Caco-2 (cell line): ENCODE measurements at regions of chr17 and their contacts with region 1.

Region 1: DNA sequence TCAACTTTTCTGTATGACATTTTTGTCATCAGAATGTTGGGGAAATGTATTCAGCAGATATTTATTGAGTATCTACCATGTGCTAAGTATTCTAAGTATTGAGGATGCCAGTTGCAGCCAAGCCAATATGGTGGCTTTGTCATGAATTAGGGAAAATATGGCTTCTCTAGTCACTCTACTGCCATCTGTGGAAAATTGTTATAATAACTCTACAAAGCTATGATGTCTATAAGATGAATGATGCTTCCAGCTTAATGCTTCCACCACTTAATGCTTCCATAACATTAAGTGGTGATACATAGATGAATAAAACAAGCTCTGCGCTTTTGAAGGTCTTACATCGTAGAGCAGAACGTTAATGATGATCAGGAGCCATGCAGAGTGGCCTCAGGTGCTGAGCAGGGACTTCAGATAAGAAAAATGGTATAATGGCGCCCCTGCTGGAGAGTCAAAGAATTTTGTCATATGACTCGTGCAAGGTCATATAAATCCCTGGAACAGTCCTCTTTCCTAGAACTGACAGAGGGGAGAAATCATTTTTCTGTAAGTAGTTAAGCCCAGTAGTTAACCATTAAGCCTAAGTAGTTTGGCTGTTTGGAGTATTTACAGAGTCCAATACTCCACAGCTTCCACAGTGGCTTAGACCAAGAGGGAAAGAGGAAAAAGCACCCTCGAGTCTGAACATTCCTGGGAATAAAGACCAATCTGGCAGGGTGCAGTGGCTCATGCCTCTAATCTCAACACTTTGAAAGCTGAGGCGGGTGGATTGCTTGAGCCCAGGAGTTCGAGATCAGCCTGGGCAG is 2.7 kb upstream of the TMIGD1 start:
- DNase-seq: peak; percentile 82 to 85
- H3K4me3 ChIP-seq: no peak overlapping the region
- H3K4me3 Mint-ChIP-seq: peak overlapping the region; percentile 48
- H3K27ac Mint-ChIP-seq: peak overlapping the region; percentile 78
- H3K4me1 ChIP-seq: peaks cover 56% of the 10 kb centered on the region
- H3K4me1 Mint-ChIP-seq: peaks cover 57% of the 10 kb centered on the region
- H3K27me3 ChIP-seq: no peaks in the 10 kb centered on the region
- H3K27me3 Mint-ChIP-seq: no peaks in the 10 kb centered on the region
- CTCF ChIP-seq: peak; percentile 60 to 92

Region 2: DNA sequence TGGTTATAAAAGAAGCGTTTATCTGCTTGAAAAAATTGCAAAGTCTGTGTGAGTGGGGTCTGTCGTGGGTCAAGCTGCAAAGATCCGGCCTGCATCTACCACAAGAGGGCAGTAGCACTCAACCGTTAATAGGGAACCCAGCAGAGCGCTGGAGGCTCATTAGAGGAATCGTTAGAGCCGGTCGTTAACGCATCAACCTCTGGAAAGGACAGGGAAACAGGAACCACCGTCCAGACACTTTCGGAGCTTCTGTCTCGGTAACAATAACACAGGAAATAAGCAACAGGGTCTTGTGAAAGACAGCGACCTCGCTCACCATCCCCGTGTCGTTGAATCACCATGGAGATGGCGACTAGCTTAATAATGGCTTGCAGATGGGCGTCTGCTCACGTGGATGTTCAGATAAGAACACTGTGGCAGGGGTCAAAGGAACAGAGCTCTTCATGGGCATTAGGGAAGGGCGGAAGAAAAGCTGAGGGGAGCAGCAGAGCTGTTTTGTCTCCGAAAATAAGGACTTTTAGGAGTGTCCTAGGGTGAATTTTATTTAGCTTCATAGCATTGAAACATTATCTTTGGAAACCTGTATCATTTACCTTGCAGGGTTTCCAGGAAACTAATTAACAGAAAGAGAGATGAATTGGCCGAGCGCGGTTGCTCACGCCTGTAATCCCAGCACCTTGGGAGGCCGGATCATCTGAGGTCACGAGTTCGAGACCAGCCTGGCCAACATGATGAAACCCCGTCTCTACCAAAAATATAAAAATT is 231.8 kb before region 1 on chr17:
- CTCF ChIA-PET with region 1: interaction called, 39 read pairs
- POLR2A ChIA-PET with region 1: no interaction called
- intact Hi-C with region 1: loop called (anchors 1 kb)
- DNase-seq: peak; percentile 86 to 90
- H3K4me3 ChIP-seq: peak overlapping the region; percentile 42
- H3K4me3 Mint-ChIP-seq: peak overlapping the region; percentile 73
- H3K27ac Mint-ChIP-seq: peak overlapping the region; percentile 80
- H3K4me1 ChIP-seq: no peaks in the 10 kb centered on the region
- H3K4me1 Mint-ChIP-seq: peaks cover 7% of the 10 kb centered on the region
- H3K27me3 ChIP-seq: no peaks in the 10 kb centered on the region
- H3K27me3 Mint-ChIP-seq: no peaks in the 10 kb centered on the region
- CTCF ChIP-seq: peak; percentile 94 to 97

Region 3: GRCh38 chr17:30191072-30191471 is 145.5 kb before region 1 on chr17:
- CTCF ChIA-PET with region 1: no interaction called
- POLR2A ChIA-PET with region 1: no interaction called
- intact Hi-C with region 1: loop called (anchors 5 kb)
- DNase-seq: no peak
- H3K4me3 ChIP-seq: no peak overlapping the region
- H3K4me3 Mint-ChIP-seq: no peak overlapping the region
- H3K27ac Mint-ChIP-seq: no peak overlapping the region
- H3K4me1 ChIP-seq: no peaks in the 10 kb centered on the region
- H3K4me1 Mint-ChIP-seq: no peaks in the 10 kb centered on the region
- H3K27me3 ChIP-seq: no peaks in the 10 kb centered on the region
- H3K27me3 Mint-ChIP-seq: no peaks in the 10 kb centered on the region
- CTCF ChIP-seq: no peak

Region 4: GRCh38 chr17:30291543-30292285 is 44.9 kb before region 1 on chr17 and contains the start of gene BLMH:
- CTCF ChIA-PET with region 1: interaction called, 17 read pairs
- POLR2A ChIA-PET with region 1: interaction called, 5 read pairs
- intact Hi-C with region 1: loop called (anchors 1 kb)
- DNase-seq: peak; percentile 72 to 84
- H3K4me3 ChIP-seq: peak within 1 kb of the TSS; percentile 80
- H3K4me3 Mint-ChIP-seq: peak within 1 kb of the TSS; percentile 76
- H3K27ac Mint-ChIP-seq: peak within 1 kb of the TSS; percentile 69
- H3K4me1 ChIP-seq: peaks cover 11% of the 10 kb centered on the region
- H3K4me1 Mint-ChIP-seq: no peaks in the 10 kb centered on the region
- H3K27me3 ChIP-seq: no peaks in the 10 kb centered on the region
- H3K27me3 Mint-ChIP-seq: no peaks in the 10 kb centered on the region
- CTCF ChIP-seq: no peak
- total RNA-seq, gene BLMH: 56.1 and 57.4 TPM in 2 replicates

Region 5: DNA sequence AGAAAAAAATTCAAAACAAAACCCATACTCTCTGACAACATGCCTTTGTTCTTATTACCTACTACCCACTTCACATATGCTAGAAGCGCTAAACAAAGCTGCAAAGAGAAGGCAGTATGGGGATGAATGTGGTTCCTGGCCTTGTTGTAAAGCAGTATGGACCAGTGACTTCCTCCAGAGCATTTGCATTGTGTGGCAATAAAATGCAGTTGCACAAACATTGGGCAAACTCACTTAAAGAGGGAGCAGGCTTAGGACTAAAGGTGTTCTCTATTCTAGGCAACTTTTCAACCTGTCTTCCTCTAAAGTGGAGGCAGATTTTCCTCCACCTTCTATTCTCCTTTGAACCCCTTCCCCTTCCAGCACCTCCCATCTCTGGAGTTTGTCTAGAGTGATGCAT is 19.8 kb before region 1 on chr17:
- CTCF ChIA-PET with region 1: interaction called, 4 read pairs
- POLR2A ChIA-PET with region 1: interaction called, 11 read pairs
- intact Hi-C with region 1: no loop called
- DNase-seq: no peak
- H3K4me3 ChIP-seq: no peak overlapping the region
- H3K4me3 Mint-ChIP-seq: no peak overlapping the region
- H3K27ac Mint-ChIP-seq: no peak overlapping the region
- H3K4me1 ChIP-seq: 0 out of 2 replicates have a peak, but pooled peaks cover 4% of the 10 kb centered on the region
- H3K4me1 Mint-ChIP-seq: peaks cover 14% of the 10 kb centered on the region
- H3K27me3 ChIP-seq: no peaks in the 10 kb centered on the region
- H3K27me3 Mint-ChIP-seq: no peaks in the 10 kb centered on the region
- CTCF ChIP-seq: no peak

Region 6: DNA sequence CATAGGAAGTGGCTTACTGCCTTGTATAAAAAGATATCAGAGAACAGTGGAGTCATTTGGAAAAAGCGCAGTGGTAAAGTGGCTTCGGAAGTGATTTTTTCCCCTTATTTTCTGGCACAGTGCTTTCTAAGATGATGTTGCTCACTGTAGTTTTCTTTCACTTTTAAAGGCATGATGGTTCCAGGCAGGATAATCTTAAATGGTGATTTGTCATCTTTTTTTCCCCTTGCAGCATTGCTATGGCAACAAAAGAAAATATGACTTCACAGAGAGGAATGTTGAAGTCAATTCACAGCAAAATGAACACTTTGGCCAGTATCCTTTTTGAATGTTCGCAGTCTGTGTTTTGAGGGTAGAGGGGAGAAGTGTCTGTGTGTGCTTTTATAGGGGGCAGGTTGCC is 183.1 kb after region 1 on chr17:
- CTCF ChIA-PET with region 1: no interaction called
- POLR2A ChIA-PET with region 1: no interaction called
- intact Hi-C with region 1: no loop called
- DNase-seq: no peak
- H3K4me3 ChIP-seq: no peak overlapping the region
- H3K4me3 Mint-ChIP-seq: no peak overlapping the region
- H3K27ac Mint-ChIP-seq: no peak overlapping the region
- H3K4me1 ChIP-seq: no peaks in the 10 kb centered on the region
- H3K4me1 Mint-ChIP-seq: no peaks in the 10 kb centered on the region
- H3K27me3 ChIP-seq: no peaks in the 10 kb centered on the region
- H3K27me3 Mint-ChIP-seq: no peaks in the 10 kb centered on the region
- CTCF ChIP-seq: no peak